Mucosa of descending colon (tissue), 3 donors: ENCODE measurements at regions of chr5 and their contacts with region 1.

Region 1: DNA sequence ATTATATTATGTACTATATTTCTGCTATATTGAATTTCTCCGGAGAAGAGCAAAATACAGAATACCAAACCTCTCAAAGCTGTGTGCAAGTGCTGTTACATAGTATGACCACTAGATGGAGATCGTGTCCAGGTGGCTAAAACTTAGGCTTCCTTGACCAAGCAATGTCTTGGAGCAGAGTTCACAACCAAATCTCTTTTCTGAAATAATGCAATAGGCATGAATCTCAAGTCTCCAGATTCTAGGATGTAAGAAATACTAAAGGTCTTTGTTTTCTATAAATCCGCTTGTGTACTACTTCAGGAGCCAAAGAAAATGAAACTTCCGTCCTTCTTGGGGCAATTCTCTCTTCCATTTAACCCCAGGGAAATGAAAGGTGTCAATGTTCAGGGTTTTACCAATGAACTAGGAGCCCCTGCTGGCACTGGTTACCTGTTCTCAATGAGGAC is 181.5 kb upstream of the RAI14 start:
- DNase-seq: peak in 1 of 3 donors; percentile 24
- ATAC-seq: peak; percentile 96
- H3K4me3 ChIP-seq: no peak overlapping the region
- H3K4me1 ChIP-seq: no peaks in the 10 kb centered on the region
- CTCF ChIP-seq: peak; percentile 82

Region 2: GRCh38 chr5:34452170-34452830 is 22.3 kb before region 1 on chr5:
- intact Hi-C with region 1: no loop called
- DNase-seq: peak in 1 of 3 donors; percentile 20
- ATAC-seq: peak; percentile 69
- H3K4me3 ChIP-seq: no peak overlapping the region
- H3K4me1 ChIP-seq: no peaks in the 10 kb centered on the region
- CTCF ChIP-seq: no peak

Region 3: GRCh38 chr5:35003018-35003957 is 528.7 kb after region 1 on chr5:
- intact Hi-C with region 1: loop called in 1 of 2 experiments (anchors 10 kb)
- DNase-seq: peak in 2 of 3 donors; percentile 48 to 70
- ATAC-seq: peak; percentile 81
- H3K4me3 ChIP-seq: no peak overlapping the region
- H3K4me1 ChIP-seq: no peaks in the 10 kb centered on the region
- CTCF ChIP-seq: peak; percentile 70